HEK293 (cell line): ENCODE measurements at regions of chr2 and their contacts with region 1.

Region 1: GRCh38 chr2:30231212-30231995 is at the start of gene LBH:
- H3K4me3 ChIP-seq: peak within 1 kb of the TSS; percentile 76
- H3K27ac ChIP-seq: peak within 1 kb of the TSS; percentile 76
- H3K4me1 ChIP-seq: peaks cover 8% of the 10 kb centered on the region
- CTCF ChIP-seq: no peak

Region 2: DNA sequence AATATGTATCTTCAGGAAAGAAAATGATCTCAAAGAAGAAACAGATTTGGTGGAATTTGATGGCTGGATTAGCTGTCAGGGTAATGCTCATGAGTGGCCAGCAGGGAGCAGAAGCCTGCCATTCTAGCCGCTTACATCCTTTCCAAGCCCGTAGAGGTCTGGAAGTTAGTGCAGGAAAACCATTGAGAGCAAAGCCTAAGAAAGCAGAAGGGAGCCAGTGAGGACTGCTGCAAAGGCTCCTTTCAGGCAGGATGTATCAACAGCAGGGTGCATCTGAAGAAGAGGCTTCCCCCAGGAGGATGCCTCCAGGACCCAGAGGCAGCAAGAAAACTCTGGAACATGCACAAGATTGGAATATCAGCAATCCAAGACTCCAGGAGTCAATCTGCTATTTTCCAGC is 23.0 kb before region 1 on chr2:
- CTCF ChIA-PET with region 1: interaction called, 35 read pairs
- POLR2A ChIA-PET with region 1: interaction called, 11 read pairs
- H3K4me3 ChIP-seq: no peak overlapping the region
- H3K27ac ChIP-seq: no peak overlapping the region
- H3K4me1 ChIP-seq: no peaks in the 10 kb centered on the region
- CTCF ChIP-seq: peak; percentile 55; the same call in 1 of the 2 replicates

Region 3: GRCh38 chr2:30219886-30220850 is 11.2 kb before region 1 on chr2:
- CTCF ChIA-PET with region 1: no interaction called
- POLR2A ChIA-PET with region 1: interaction called, 12 read pairs
- H3K4me3 ChIP-seq: no peak overlapping the region
- H3K27ac ChIP-seq: no peak overlapping the region
- H3K4me1 ChIP-seq: no peaks in the 10 kb centered on the region
- CTCF ChIP-seq: no peak

Region 4: GRCh38 chr2:30273261-30273861 is 42.0 kb after region 1 on chr2:
- CTCF ChIA-PET with region 1: interaction called, 3 read pairs
- POLR2A ChIA-PET with region 1: interaction called, 19 read pairs
- H3K4me3 ChIP-seq: no peak overlapping the region
- H3K27ac ChIP-seq: no peak overlapping the region
- H3K4me1 ChIP-seq: peaks cover 8% of the 10 kb centered on the region
- CTCF ChIP-seq: no peak

Region 5: DNA sequence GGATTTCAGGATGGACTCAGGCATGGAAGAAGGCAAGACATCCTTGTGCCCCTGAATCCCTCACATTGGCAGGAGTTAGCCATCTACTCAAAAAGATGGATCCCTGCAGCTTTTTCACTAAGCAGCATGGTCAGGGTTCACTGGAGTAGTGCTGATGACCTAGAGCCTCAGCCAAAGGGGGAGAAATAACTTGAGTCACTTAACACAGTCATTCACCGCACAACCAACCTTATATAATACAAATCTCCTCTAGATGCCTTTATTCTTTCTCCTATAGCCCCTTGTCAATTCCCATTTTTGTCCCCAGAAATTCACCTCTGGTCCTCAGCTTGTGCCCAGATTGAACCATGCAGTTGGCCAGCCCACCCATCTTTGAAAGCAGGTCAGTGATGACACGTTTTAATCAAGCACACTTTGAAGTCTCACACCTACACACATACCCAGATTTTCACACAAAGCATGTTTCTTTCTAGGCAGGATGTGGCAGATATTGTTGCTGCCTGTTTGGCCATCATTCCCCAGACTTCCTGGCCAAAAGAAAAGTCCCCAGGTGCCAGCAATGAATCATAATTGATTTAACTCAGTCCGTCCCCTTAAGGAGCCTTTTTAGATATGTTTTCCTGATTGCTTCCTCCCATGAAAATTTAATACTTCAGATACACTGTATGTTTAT is 84.1 kb after region 1 on chr2:
- CTCF ChIA-PET with region 1: no interaction called
- POLR2A ChIA-PET with region 1: no interaction called
- H3K4me3 ChIP-seq: no peak overlapping the region
- H3K27ac ChIP-seq: no peak overlapping the region
- H3K4me1 ChIP-seq: no peaks in the 10 kb centered on the region
- CTCF ChIP-seq: no peak